Heart left ventricle (tissue), 16 donors: ENCODE measurements at regions of chr13 and their contacts with region 1.

Region 1: DNA sequence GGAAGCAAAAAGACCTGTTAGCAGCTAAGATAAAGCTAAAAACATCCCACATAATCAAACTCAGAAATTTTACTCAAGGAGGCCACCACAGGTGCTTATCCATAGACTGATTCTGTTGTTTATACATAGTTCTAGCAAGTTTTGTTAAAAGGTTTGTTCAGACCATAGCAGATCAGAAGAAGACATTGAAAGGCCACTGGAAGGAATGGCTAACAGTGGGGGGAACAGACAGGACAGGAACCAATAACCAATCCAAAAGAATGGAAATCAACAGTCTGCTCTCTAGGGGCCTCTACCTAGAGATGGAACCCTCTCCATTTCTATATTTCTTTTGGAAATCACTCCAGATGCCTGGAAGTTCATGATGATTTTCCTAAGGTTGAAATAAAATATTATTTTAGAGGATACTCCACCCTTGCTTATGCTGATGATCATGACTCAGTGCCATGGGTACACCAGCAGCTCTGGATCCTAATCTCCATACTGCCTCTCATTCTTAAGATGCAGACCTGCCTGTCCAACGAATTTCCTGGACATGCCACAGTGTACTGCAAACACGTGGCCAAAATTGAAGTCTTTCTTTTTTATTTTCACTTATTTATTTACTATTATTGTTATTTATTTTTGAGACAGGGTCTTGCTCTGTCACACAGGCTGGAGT is 260.0 kb downstream of the MYO16 start:
- DNase-seq: no peak
- ATAC-seq: no peak
- H3K4me3 ChIP-seq: no peak overlapping the region
- H3K27ac ChIP-seq: no peak overlapping the region
- H3K4me1 ChIP-seq: no peaks in the 10 kb centered on the region
- H3K27me3 ChIP-seq: no peaks in the 10 kb centered on the region
- CTCF ChIP-seq: no peak
- POLR2A ChIP-seq: no peak

Region 2: DNA sequence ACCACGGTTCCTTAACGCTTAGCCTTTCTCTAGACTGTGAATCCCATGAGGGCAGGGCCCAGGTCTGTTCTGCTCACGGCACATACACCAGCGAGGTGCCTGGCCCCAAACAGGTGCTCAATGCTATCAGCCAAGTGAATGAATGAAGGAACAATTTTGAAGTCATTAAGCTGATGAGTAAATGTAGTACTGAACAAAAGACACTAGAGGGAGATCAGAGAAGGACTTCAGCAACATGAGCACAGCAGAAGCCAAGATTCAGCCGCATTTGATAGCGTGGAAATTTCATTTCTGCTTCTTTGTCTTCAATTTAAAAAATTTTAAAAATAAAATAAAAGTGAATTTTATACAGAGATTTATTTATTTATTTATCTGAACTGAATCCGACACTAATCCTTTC is 280.1 kb before region 1 on chr13:
- intact Hi-C with region 1: loop called in 6 of 10 experiments (anchors 2 to 5 kb)
- DNase-seq: no peak
- ATAC-seq: peak in 1 of 4 donors; percentile 38
- H3K4me3 ChIP-seq: no peak overlapping the region
- H3K27ac ChIP-seq: no peak overlapping the region
- H3K4me1 ChIP-seq: peaks cover 0 to 9% (median 0%) of the 10 kb centered on the region in 12 donors
- H3K27me3 ChIP-seq: no peaks in the 10 kb centered on the region
- CTCF ChIP-seq: peak; percentile 25 to 64 (median 54)
- POLR2A ChIP-seq: no peak

Region 3: GRCh38 chr13:108827636-108828035 is 61.8 kb before region 1 on chr13:
- intact Hi-C with region 1: no loop called
- DNase-seq: no peak
- ATAC-seq: no peak
- H3K4me3 ChIP-seq: no peak overlapping the region
- H3K27ac ChIP-seq: no peak overlapping the region
- H3K4me1 ChIP-seq: no peaks in the 10 kb centered on the region
- H3K27me3 ChIP-seq: no peaks in the 10 kb centered on the region
- CTCF ChIP-seq: no peak
- POLR2A ChIP-seq: no peak

Region 4: DNA sequence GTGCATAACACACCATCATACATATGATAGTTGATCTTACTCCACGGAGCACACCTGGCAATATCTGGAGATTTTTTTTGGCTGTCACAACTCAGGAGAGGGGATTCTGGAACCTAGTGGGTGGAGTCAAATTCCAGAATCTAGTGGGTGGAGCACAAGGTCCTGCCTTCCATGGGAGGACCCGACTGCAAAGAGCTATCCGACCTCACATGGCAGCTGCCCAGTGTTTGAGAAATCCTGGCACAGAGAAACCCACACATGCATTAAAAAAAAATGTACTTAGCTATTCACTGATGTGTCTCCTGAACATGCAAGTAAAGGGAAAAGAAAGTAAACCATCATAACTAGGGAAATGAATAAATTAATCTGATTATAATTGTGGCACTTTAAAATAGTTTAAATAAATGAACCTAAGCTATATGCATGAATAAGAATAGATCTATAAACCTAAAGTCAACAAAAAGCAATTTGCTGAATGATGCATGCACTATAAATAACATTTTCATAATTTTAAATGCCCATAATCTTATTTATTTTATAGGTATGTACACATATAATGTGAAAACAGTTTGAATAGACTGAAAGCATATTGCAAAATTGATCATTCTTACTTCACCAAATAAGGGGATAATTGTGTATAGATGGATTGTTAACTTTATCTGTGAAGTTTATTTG is 40.2 kb after region 1 on chr13:
- intact Hi-C with region 1: no loop called
- DNase-seq: no peak
- ATAC-seq: no peak
- H3K4me3 ChIP-seq: no peak overlapping the region
- H3K27ac ChIP-seq: no peak overlapping the region
- H3K4me1 ChIP-seq: no peaks in the 10 kb centered on the region
- H3K27me3 ChIP-seq: no peaks in the 10 kb centered on the region
- CTCF ChIP-seq: no peak
- POLR2A ChIP-seq: no peak

Region 5: DNA sequence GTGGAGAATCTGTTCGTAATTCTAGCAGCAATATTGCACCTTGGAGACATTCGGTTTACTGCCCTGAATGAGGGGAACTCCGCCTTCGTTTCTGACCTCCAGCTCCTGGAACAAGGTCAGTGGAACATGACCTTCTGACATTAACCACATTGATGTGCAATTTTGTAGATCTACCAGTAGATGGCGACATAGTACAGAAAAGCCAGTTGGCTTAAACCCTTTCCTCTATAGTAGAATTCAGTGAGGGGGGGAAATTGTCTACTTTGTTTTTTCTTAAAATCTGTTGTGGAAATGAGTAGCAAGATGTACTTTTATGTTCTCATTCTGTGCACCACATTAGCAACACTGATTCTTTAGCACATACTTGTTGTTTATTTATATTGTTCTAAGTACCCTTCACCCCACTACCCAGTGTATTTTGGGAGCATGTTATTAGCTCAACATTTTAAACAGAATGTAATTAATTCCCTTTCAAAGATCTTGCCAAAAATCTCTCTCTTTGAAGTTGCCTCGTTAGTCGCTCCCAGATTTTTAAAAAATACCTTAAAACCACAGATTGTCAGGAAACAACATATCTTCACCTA is 72.2 kb after region 1 on chr13:
- intact Hi-C with region 1: no loop called
- DNase-seq: no peak
- ATAC-seq: peak; percentile 41 to 85 (median 82)
- H3K4me3 ChIP-seq: no peak overlapping the region
- H3K27ac ChIP-seq: peak overlapping the region in 1 of 12 donors; percentile 5
- H3K4me1 ChIP-seq: peaks cover 0 to 6% (median 0%) of the 10 kb centered on the region in 12 donors
- H3K27me3 ChIP-seq: no peaks in the 10 kb centered on the region
- CTCF ChIP-seq: peak; percentile 81 to 92 (median 86)
- POLR2A ChIP-seq: no peak

Region 6: GRCh38 chr13:108996430-108996829 is 107.0 kb after region 1 on chr13:
- intact Hi-C with region 1: no loop called
- DNase-seq: no peak
- ATAC-seq: no peak
- H3K4me3 ChIP-seq: no peak overlapping the region
- H3K27ac ChIP-seq: no peak overlapping the region
- H3K4me1 ChIP-seq: no peaks in the 10 kb centered on the region
- H3K27me3 ChIP-seq: no peaks in the 10 kb centered on the region
- CTCF ChIP-seq: no peak
- POLR2A ChIP-seq: no peak